Endothelial cell of umbilical vein (primary cell): ENCODE measurements at regions of chr17 and their contacts with region 1.

Region 1: DNA sequence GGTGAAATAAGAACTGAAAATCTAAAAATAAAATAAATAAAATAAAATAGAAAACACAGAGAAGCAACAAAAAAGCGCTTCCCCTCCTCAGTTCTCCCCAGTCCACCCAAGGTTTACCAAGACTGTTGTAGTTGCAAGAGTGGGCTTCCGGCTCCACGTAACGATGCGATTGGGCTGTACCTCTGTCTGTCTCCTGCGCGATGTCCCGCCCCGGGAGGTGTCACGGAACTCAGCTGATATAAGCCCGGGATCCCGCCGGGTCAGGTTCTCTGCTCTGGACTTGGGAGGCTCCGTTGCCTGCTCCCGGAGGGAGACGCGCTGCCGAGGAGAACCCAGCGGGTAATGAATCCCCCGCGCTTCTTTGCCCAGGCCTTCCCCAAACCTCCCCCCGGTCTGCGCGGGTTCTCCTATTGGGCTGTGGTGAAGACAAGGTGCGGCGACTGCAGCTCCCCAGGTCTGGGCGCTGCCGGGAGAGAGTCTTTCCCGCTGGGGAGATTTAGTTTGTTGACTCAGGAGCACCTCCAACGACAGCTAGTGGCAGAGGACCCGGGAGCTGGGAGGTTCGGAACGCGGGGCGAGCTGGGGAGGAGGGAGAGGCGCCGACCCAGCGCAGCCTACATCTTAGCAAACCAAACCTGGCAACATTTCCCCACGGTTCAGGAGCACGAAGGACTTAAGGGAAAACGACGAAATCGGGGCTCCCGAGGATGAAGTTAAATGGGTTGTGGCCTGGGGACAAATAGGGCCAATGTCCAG is at the start of gene SLFN5:
- DNase-seq: peak; percentile 95
- H3K4me3 ChIP-seq: peak within 1 kb of the TSS; percentile 52 to 68 (median 58)
- H3K27ac ChIP-seq: peak within 1 kb of the TSS; percentile 82
- H3K4me1 ChIP-seq: peaks cover 27% of the 10 kb centered on the region
- H3K27me3 ChIP-seq: peaks cover 0 to 6% of the 10 kb centered on the region in 2 experiments
- CTCF ChIP-seq: no peak
- POLR2A ChIP-seq: peak; percentile 98
- total RNA-seq, gene SLFN5: 15.7 and 24.2 TPM in 2 replicates

Region 2: DNA sequence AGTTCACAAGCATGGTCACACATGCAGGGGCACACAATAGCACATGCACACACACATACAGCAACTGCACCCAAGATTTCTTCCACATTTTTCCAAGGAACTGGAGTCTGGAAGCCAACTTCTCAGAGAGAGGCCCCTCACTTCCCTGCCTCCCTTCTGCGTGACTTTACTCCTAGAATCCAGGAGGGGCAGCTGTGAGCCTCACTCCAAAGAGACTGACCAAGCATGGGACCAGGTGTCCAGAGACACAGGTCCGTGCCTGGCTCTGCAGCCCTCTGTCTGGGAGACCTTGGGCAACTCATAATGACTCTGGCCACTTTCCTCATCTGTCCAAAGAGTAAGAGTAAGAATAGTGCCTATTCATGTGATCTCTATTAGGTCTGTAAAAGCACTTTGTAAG is 768.3 kb before region 1 on chr17:
- CTCF ChIA-PET with region 1: no interaction called
- POLR2A ChIA-PET with region 1: no interaction called
- dilution Hi-C with region 1: no loop called
- intact Hi-C with region 1: no loop called
- DNase-seq: no peak
- H3K4me3 ChIP-seq: no peak overlapping the region
- H3K27ac ChIP-seq: no peak overlapping the region
- H3K4me1 ChIP-seq: no peaks in the 10 kb centered on the region
- H3K27me3 ChIP-seq: no peaks in the 10 kb centered on the region
- CTCF ChIP-seq: no peak
- POLR2A ChIP-seq: no peak

Region 3: DNA sequence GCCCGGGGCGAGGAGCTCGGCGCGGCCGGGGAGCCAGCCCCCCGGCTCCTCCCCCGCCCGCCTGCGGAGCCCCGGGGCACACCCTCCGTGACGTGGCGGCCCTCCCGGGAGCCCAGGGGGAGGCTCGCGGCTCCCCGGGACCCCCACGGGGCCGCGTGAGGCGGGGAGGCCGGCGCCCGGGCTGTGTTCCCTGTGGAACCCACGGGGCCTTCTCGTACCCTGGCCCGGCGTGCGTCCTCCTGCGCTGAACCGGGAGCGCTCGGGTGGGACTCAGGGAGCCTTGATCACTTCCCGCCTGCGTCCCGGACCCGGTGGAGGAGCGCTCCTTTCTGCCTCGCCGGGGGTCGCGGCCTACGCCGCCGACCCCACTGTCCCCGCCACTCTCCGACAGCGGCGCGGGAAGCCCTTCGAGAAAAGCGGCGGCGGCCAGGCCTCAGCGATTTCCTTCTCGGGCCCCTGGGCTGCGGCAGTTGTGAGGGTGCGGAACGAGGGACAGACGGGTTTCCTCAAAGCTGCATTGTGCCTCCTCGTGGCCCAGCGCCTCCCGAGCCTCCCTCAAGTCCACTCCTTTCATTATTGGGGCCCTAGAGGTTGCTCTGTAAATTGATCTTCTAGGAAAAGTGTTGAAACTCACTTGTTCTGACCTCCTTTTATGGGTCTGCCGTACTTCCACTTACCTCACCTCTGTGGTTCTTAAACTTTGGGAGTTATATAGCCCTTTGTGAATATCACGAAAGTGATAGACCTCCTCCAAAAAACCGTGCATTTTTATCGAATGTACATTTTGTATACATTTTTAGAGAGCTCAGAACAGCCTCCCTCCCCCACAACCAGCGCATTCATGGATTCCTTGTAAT is 262.1 kb before region 1 on chr17:
- CTCF ChIA-PET with region 1: no interaction called
- POLR2A ChIA-PET with region 1: no interaction called
- dilution Hi-C with region 1: no loop called
- intact Hi-C with region 1: loop called (anchors 2 kb)
- DNase-seq: peak; percentile 80
- H3K4me3 ChIP-seq: peak overlapping the region; percentile 65 to 92 (median 89)
- H3K27ac ChIP-seq: peak overlapping the region; percentile 96
- H3K4me1 ChIP-seq: peaks cover 19% of the 10 kb centered on the region
- H3K27me3 ChIP-seq: no peaks in the 10 kb centered on the region
- CTCF ChIP-seq: peak in 1 of 2 donors; percentile 51
- POLR2A ChIP-seq: peak; percentile 80

Region 4: DNA sequence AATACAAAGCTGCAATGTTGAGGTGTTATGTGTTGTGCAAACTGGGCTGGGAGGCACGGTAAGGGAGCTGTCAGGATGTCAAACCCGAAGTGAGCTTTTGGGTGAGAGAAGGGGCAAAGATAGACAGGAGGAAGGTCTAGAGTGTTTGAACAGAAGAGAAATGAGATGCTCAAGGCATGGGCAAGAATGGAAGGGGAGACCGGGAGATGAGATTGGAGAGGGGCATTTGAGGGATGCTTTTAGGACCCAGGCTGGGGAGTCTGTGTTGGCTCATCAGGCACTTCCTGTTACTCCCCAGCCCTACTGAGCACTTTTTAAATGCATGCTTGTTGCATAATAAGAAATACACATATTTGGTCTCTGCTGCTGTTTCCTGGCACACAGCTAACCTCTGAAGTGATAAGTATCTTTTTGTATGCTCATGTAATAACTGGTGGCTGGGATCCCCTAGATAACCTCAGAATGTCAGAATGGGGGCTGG is 81.7 kb before region 1 on chr17:
- CTCF ChIA-PET with region 1: no interaction called
- POLR2A ChIA-PET with region 1: no interaction called
- dilution Hi-C with region 1: no loop called
- intact Hi-C with region 1: no loop called
- DNase-seq: no peak
- H3K4me3 ChIP-seq: no peak overlapping the region
- H3K27ac ChIP-seq: no peak overlapping the region
- H3K4me1 ChIP-seq: no peaks in the 10 kb centered on the region
- H3K27me3 ChIP-seq: peaks cover 4 to 11% of the 10 kb centered on the region in 2 experiments
- CTCF ChIP-seq: no peak
- POLR2A ChIP-seq: no peak

Region 5: GRCh38 chr17:35191001-35191695 is 51.8 kb before region 1 on chr17:
- CTCF ChIA-PET with region 1: no interaction called
- POLR2A ChIA-PET with region 1: no interaction called
- dilution Hi-C with region 1: no loop called
- intact Hi-C with region 1: loop called (anchors 2 kb)
- DNase-seq: peak; percentile 31
- H3K4me3 ChIP-seq: no peak overlapping the region
- H3K27ac ChIP-seq: peak overlapping the region; percentile 35
- H3K4me1 ChIP-seq: peaks cover 5% of the 10 kb centered on the region
- H3K27me3 ChIP-seq: no peaks in the 10 kb centered on the region
- CTCF ChIP-seq: no peak
- POLR2A ChIP-seq: no peak

Region 6: DNA sequence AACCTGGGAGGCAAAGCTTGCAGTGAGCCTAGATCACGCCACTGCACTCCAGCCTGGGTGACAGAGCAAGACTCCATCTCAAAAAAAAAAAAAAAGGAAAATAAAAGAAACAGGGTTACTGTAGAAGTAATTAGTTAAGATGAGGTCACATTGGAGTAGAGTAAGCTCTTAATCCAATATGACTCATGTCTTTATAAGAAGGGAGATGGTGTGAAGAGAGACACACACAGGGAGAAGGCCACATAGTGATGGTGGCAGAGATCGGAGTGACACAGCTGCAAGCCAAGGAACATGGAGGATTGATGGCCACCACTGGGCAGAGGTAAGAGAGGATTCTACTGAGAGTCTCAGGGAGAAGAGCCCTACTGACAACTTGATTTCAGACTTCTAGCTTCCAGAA is 15.4 kb before region 1 on chr17:
- CTCF ChIA-PET with region 1: no interaction called
- POLR2A ChIA-PET with region 1: no interaction called
- dilution Hi-C with region 1: no loop called
- intact Hi-C with region 1: no loop called
- DNase-seq: no peak
- H3K4me3 ChIP-seq: no peak overlapping the region
- H3K27ac ChIP-seq: no peak overlapping the region
- H3K4me1 ChIP-seq: no peaks in the 10 kb centered on the region
- H3K27me3 ChIP-seq: peaks cover 9 to 17% of the 10 kb centered on the region in 2 experiments
- CTCF ChIP-seq: no peak
- POLR2A ChIP-seq: no peak

Region 7: GRCh38 chr17:35322749-35323148 is 79.8 kb after region 1 on chr17:
- CTCF ChIA-PET with region 1: no interaction called
- POLR2A ChIA-PET with region 1: no interaction called
- dilution Hi-C with region 1: no loop called
- intact Hi-C with region 1: no loop called
- DNase-seq: no peak
- H3K4me3 ChIP-seq: no peak overlapping the region
- H3K27ac ChIP-seq: no peak overlapping the region
- H3K4me1 ChIP-seq: no peaks in the 10 kb centered on the region
- H3K27me3 ChIP-seq: peaks cover 5 to 8% of the 10 kb centered on the region in 2 experiments
- CTCF ChIP-seq: no peak
- POLR2A ChIP-seq: no peak

Region 8: GRCh38 chr17:35345926-35346771 is 103.2 kb after region 1 on chr17:
- CTCF ChIA-PET with region 1: no interaction called
- POLR2A ChIA-PET with region 1: no interaction called
- dilution Hi-C with region 1: no loop called
- intact Hi-C with region 1: loop called (anchors 2 kb)
- DNase-seq: peak; percentile 45
- H3K4me3 ChIP-seq: peak overlapping the region in 2 of 3 experiments; percentile 13 to 46
- H3K27ac ChIP-seq: no peak overlapping the region
- H3K4me1 ChIP-seq: peaks cover 10% of the 10 kb centered on the region
- H3K27me3 ChIP-seq: peaks cover 3 to 8% of the 10 kb centered on the region in 2 experiments
- CTCF ChIP-seq: no peak
- POLR2A ChIP-seq: no peak

Region 9: GRCh38 chr17:35587074-35587971 is 344.3 kb after region 1 on chr17 and contains the start of gene AP2B1:
- CTCF ChIA-PET with region 1: no interaction called
- POLR2A ChIA-PET with region 1: no interaction called
- dilution Hi-C with region 1: no loop called
- intact Hi-C with region 1: loop called (anchors 5 kb)
- DNase-seq: peak; percentile 99
- H3K4me3 ChIP-seq: peak within 1 kb of the TSS; percentile 54 to 84 (median 70)
- H3K27ac ChIP-seq: peak within 1 kb of the TSS; percentile 91
- H3K4me1 ChIP-seq: peaks cover 19% of the 10 kb centered on the region
- H3K27me3 ChIP-seq: peaks cover 4 to 6% of the 10 kb centered on the region in 2 experiments
- CTCF ChIP-seq: no peak
- POLR2A ChIP-seq: peak; percentile 81
- total RNA-seq, gene AP2B1: 198 and 200 TPM in 2 replicates